ENCODE measurements at regions of chr7 and their contacts with region 1.

Region 1: DNA sequence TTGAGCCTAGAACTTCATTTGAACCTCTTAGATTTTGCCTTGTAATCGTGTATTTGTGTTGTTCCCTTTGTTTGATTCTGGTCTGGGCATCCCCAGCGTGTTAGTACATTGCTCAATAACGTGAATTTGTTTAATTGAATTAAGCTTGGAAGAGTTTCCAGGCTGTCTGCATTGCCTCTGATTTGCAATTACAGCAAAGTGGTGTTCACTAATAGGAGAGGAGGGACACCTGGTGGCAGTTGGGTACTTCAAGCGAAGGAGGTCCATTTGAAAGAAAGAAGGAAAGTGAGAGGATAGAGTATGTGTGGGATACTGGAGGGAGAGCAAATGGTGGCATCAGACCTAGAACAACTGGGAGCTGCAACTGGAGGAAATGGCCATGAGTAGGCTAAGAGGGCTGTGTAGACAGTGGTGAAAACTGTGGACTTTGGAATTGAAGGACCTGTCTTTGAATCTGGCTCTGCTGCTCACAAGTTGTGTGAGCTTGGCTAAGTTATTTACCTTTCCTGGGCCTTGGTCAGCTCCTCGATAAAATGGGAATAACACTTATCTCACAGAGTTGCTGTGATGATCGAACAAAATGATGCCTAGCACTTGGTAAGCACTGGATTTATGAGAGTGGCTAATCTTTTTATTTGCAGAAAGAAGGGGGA is 15.1 kb downstream of the LSMEM1 start:
- DNase-seq: peak in 2 of 5 donors; percentile 46 to 55
- ATAC-seq: peak; percentile 52 to 90 (median 89)
- H3K4me3 ChIP-seq: no peak overlapping the region
- H3K27ac ChIP-seq: peak overlapping the region in 1 of 12 donors; percentile 30
- H3K4me1 ChIP-seq: no peaks in the 10 kb centered on the region
- H3K27me3 ChIP-seq: no peaks in the 10 kb centered on the region
- CTCF ChIP-seq: peak; percentile 35 to 70 (median 62)
- POLR2A ChIP-seq: no peak

Region 2: DNA sequence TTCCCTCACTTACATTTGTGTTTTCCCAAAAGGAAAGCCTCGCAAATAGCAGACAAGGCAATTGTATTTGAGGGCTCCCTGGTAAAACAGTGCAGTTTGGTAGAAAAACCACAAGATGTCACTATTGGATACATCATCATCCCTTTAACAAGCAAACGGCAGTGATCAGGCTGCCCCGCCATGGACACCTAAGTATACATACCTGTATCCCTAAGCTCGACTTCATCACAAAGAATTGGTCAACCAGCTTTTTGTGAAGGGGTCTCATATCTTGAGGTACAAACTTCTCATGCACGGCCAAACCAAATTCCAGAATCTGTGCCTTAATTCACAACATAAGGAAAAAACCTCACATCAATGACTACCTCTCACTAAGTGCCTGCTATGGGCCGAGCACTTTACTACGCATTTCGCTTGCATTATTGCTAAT is 754.1 kb before region 1 on chr7:
- intact Hi-C with region 1: loop called in 7 of 10 experiments (anchors 5 to 10 kb)
- DNase-seq: peak in 1 of 5 donors; percentile 46
- ATAC-seq: peak; percentile 42 to 78 (median 68)
- H3K4me3 ChIP-seq: no peak overlapping the region
- H3K27ac ChIP-seq: no peak overlapping the region
- H3K4me1 ChIP-seq: peaks cover 0 to 7% (median 0%) of the 10 kb centered on the region in 12 donors
- H3K27me3 ChIP-seq: no peaks in the 10 kb centered on the region
- CTCF ChIP-seq: peak; percentile 47 to 75 (median 60)
- POLR2A ChIP-seq: no peak

Region 3: DNA sequence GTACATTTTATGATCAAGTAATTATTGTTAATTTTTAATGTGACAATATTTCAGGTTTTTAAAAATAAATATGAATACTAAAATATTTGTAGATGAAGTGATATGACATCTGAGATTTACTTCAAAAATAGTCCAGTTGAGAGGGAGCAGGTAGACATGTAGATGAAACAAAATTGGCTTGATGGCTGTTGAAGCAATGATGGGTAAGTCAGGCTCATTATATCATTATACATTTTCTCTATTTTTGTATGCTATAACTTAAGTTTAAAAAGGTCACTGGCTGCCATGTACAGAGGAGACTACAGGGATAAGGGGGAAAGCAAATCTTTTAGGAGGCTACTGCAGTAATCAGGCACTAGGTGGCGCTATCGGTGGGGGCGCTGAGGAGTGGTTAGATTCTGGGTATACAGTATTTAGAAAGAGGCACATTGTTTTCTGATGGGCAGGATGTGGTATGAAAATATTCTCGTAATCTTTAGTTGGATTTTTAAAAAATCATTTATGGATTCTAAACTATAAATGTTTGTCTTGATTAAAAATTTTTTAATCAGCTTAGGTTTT is 743.8 kb before region 1 on chr7:
- intact Hi-C with region 1: loop called in 8 of 10 experiments (anchors 5 to 10 kb)
- DNase-seq: peak; percentile 37 to 71 (median 44)
- ATAC-seq: peak in 3 of 4 donors; percentile 50 to 56 (median 56)
- H3K4me3 ChIP-seq: no peak overlapping the region
- H3K27ac ChIP-seq: no peak overlapping the region
- H3K4me1 ChIP-seq: peaks cover 0 to under 1% (median 0%) of the 10 kb centered on the region in 12 donors
- H3K27me3 ChIP-seq: no peaks in the 10 kb centered on the region
- CTCF ChIP-seq: peak; percentile 63 to 81 (median 75)
- POLR2A ChIP-seq: no peak

Region 4: DNA sequence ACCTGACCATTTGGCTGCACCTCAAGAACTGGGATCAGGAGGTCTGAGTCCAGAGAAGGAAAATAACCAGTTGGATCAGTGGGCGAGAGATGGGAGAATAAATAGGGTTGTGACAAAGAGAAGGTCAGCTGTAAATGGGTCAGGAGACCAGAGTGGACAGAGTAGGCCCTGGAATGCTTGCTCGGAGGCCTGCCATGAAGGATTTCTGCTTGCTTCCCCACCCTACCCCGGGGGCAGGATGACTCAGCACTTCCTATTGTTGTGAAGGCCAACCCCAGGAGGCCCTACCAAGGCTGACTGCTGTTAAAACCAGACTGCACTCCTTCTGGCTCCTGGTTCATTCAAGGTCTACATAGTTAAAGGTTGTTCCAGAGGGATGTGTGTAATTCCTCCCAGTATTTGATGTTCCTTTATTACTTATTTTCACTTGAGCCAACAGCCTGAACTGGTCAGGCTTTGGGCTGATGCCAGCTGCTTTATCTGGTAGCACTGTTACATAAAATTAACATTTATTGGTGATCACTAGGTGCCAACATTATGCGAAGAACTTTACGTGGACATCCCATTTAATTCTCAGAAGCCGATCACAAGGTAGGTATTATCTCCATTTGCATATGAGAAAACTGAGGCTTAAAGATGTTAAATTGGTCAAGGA is 73.0 kb before region 1 on chr7:
- intact Hi-C with region 1: loop called in 2 of 10 experiments (anchors 5 kb)
- DNase-seq: peak; percentile 65 to 82 (median 75)
- ATAC-seq: peak; percentile 91 to 97 (median 95)
- H3K4me3 ChIP-seq: no peak overlapping the region
- H3K27ac ChIP-seq: peak overlapping the region in 6 of 12 donors; percentile 13 to 42 (median 22)
- H3K4me1 ChIP-seq: peaks cover 0 to 24% (median 14%) of the 10 kb centered on the region in 12 donors
- H3K27me3 ChIP-seq: no peaks in the 10 kb centered on the region
- CTCF ChIP-seq: no peak
- POLR2A ChIP-seq: no peak